ENCODE measurements at regions of chr3 and their contacts with region 1.

Region 1: GRCh38 chr3:31908391-31909097 is 72.5 kb downstream of the OSBPL10 start:
- DNase-seq: peak; percentile 14
- ATAC-seq: no peak
- H3K4me3 ChIP-seq: no peak overlapping the region
- H3K27ac ChIP-seq: no peak overlapping the region
- H3K4me1 ChIP-seq: no peaks in the 10 kb centered on the region
- H3K27me3 ChIP-seq: no peaks in the 10 kb centered on the region
- CTCF ChIP-seq: no peak
- POLR2A ChIP-seq: no peak
- RAD21 ChIP-seq: no peak

Region 2: DNA sequence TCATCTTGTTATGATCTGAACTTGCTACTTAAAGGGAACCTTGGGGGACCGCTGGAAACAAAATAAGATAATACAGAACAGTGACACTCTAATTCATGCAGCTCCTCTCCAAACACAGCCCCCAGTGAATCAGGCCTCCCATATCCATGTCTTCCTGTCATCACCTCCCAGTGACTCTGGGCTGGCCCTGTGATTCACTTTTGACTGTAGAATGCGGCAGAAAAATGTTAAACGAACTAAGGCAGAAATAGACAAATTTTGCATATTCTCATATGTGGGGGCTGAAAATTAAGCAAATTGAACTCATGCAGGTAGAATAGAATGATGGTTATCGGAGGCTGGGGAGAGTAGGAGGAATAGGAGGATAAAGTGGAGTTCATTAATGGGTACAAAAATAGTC is 993.8 kb before region 1 on chr3:
- CTCF ChIA-PET with region 1: no interaction called
- POLR2A ChIA-PET with region 1: no interaction called
- dilution Hi-C with region 1: no loop called
- in situ Hi-C with region 1: no loop called
- intact Hi-C with region 1: loop called (anchors 5 kb)
- DNase-seq: no peak
- ATAC-seq: no peak
- H3K4me3 ChIP-seq: no peak overlapping the region
- H3K27ac ChIP-seq: no peak overlapping the region
- H3K4me1 ChIP-seq: no peaks in the 10 kb centered on the region
- H3K27me3 ChIP-seq: peaks cover 5% of the 10 kb centered on the region
- CTCF ChIP-seq: no peak
- POLR2A ChIP-seq: no peak
- RAD21 ChIP-seq: no peak

Region 3: DNA sequence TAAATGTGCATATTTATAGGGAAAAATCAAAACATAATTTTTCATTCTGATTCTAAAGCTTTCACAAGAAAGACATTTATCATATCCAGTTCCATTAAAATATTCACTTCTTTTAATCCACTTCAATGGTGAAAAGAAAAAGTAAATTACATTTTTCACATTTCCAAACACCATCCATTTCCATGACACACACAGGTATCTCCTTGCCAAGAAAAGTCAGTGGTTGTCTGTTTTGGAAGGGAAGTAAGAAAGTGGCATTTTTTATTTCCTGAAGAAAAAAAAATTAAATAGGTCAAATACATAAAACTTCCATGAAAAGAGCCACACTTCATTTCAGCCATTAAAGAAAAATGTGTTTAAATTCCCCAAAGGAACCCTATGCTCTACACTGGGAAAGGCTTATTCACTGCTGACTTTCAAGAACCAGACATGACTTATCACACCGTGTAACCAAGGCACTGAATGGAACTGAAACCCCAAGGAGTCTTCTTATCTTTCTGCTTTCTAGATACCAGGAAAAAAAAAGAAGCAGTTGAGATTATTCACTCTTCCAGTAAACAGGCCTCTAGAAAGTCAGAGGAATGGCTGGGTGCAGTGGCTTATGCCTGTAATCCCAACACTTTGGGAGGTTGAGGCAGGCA is 28.0 kb after region 1 on chr3:
- CTCF ChIA-PET with region 1: no interaction called
- POLR2A ChIA-PET with region 1: interaction called, 12 read pairs
- dilution Hi-C with region 1: no loop called
- in situ Hi-C with region 1: no loop called
- intact Hi-C with region 1: no loop called
- DNase-seq: peak; percentile 61
- ATAC-seq: no peak
- H3K4me3 ChIP-seq: no peak overlapping the region
- H3K27ac ChIP-seq: no peak overlapping the region
- H3K4me1 ChIP-seq: no peaks in the 10 kb centered on the region
- H3K27me3 ChIP-seq: no peaks in the 10 kb centered on the region
- CTCF ChIP-seq: no peak
- POLR2A ChIP-seq: no peak
- RAD21 ChIP-seq: no peak